ENCODE measurements at regions of chr6 and their contacts with region 1.

Region 1: DNA sequence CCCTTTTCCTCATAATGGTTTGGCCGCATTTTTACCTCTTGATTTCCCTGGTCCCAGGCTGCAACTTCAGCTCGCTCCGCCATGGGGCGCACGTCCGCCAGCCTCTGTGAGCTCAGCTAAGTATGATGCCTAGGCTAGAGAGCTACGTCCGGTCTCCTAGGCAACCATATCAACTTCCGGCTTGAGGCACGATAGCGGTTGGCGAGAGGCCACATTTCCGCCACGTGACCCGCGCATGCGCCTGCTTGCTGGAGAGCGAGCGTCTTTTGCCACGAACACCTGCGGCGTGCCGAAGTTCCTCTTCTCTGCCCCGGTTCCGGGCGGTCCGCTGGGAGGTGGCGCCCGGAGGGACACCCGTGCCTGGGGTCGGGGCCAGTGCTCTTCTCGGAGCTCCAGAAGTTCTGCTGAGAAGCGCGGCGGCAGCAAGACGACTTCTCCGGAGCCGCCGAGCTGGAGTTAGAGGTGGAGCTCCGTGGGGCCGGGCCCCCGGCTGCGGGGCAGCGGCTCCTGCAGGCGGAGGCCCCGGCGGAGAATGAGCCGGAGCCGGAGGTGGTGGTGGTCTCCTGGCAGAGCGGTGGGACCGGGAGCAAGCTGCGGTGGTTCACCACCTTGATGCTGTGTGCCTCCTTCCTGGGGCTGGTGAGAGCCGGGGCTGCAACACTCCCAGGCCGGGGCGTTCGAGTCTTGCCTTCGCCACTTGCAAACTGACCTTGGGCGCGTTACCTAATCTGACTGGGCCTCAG is 172.0 kb downstream of the SLC16A10 start:
- DNase-seq: peak; percentile 95 to 100 (median 99)
- ATAC-seq: peak; percentile 96 to 98 (median 96)
- H3K4me3 ChIP-seq: peak overlapping the region; percentile 70 to 74
- H3K4me3 Mint-ChIP-seq: peak overlapping the region; percentile 66 to 85 (median 81)
- H3K27ac ChIP-seq: peak overlapping the region; percentile 85
- H3K27ac Mint-ChIP-seq: peak overlapping the region; percentile 83 to 84
- H3K4me1 ChIP-seq: peaks cover 5 to 21% of the 10 kb centered on the region in 2 experiments
- H3K4me1 Mint-ChIP-seq: peaks cover 30 to 38% (median 34%) of the 10 kb centered on the region in 3 donors
- H3K27me3 ChIP-seq: peaks cover 0 to 2% of the 10 kb centered on the region in 2 experiments
- H3K27me3 Mint-ChIP-seq: peaks cover 0 to 8% of the 10 kb centered on the region in 2 donors

Region 2: DNA sequence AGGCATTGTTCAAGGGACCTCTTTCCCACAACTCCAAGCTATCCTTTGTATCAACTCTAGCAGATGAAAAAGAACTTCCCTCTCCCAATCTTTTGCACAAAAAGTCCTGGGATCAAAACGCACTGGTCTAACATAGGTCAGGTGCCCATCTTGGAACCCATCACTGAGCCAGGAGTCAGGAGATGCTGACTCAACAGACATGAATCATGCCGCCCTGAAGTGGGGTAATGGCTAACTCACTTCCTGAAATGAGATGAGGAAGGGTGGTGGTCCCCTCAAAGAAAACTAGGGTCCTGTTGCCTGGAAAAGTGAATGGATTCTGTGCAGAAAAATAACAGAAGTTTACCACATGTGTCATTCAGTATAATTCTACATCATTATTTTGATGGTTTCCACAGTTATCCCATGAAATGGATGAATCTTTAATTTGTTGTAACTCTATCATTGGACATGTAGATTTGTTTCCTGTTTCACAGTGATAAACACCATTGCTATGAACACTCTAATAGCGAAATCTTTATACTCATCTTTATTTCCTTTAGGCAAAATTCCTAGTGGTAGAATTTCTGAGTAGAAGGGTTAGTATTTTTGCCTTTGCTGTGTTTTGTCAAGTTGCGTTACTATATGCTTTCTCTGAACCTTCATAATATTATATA is 20.7 kb before region 1 on chr6:
- CTCF ChIA-PET with region 1: no interaction called
- POLR2A ChIA-PET with region 1: no interaction called
- DNase-seq: no peak
- ATAC-seq: no peak
- H3K4me3 ChIP-seq: no peak overlapping the region
- H3K4me3 Mint-ChIP-seq: no peak overlapping the region
- H3K27ac ChIP-seq: no peak overlapping the region
- H3K27ac Mint-ChIP-seq: no peak overlapping the region
- H3K4me1 ChIP-seq: no peaks in the 10 kb centered on the region
- H3K4me1 Mint-ChIP-seq: no peaks in the 10 kb centered on the region
- H3K27me3 ChIP-seq: peaks cover 0 to 2% of the 10 kb centered on the region in 2 experiments
- H3K27me3 Mint-ChIP-seq: peaks cover 0 to 4% of the 10 kb centered on the region in 2 donors

Region 3: GRCh38 chr6:111291336-111292259 is 32.3 kb after region 1 on chr6:
- CTCF ChIA-PET with region 1: interaction called, 3 to 11 read pairs
- POLR2A ChIA-PET with region 1: no interaction called
- DNase-seq: no peak
- ATAC-seq: no peak
- H3K4me3 ChIP-seq: no peak overlapping the region
- H3K4me3 Mint-ChIP-seq: no peak overlapping the region
- H3K27ac ChIP-seq: no peak overlapping the region
- H3K27ac Mint-ChIP-seq: peak overlapping the region in 1 of 2 donors; percentile 70
- H3K4me1 ChIP-seq: peaks cover 3 to 8% of the 10 kb centered on the region in 2 experiments
- H3K4me1 Mint-ChIP-seq: peaks cover 18 to 20% (median 19%) of the 10 kb centered on the region in 3 donors
- H3K27me3 ChIP-seq: no peaks in the 10 kb centered on the region
- H3K27me3 Mint-ChIP-seq: no peaks in the 10 kb centered on the region

Region 4: DNA sequence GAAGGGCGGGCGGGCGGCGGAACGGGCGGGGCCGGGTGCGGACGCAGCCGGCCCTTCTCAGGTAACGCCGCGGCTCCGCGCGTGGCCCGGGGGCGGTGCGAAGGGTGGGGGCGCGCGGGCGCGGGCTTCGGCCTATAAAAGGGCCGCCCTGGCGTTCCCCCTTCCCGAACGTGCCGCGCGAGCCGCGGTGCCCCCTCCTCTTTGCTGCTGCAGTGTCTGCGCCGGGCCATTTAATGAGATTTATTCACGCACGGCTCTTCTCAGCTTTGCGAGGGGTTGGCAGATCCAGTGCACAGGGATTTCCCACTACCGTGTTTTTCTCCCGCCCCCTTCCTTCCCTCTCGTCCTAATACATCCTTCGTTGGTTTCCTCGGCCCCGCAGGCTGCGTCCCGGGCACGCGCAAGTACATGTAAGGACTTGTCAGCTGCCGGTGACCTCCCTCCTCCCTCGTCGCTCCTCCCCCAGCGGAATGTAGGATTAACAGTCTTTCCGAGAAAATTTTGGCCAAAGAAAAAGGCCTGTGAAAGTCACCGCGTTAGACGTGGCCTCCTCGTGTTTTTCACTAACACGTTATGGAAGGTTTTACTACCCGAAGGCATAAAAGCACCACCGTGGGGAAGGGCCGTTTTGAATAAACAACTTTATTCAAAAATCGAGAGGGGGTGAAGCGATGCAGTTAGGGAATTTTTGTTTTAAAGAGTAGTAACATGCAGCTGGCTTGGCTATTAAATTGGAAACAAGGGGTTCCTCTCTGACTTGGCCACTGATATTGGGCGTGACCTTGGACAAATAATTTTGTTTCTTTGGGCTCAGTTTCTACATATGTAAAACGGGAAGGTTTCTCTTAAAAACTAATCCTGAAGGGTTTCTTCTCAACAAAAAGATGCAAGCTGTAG is 224.7 kb after region 1 on chr6:
- CTCF ChIA-PET with region 1: interaction called, 9 to 74 read pairs
- POLR2A ChIA-PET with region 1: interaction called in 1 of 2 experiments, 16 read pairs
- DNase-seq: peak in 25 of 35 experiments; percentile 64 to 91 (median 83)
- ATAC-seq: peak in 3 of 4 experiments; percentile 75 to 76 (median 75)
- H3K4me3 ChIP-seq: peak overlapping the region; percentile 96 to 98
- H3K4me3 Mint-ChIP-seq: peak overlapping the region; percentile 86 to 98 (median 97)
- H3K27ac ChIP-seq: peak overlapping the region; percentile 99
- H3K27ac Mint-ChIP-seq: peak overlapping the region; percentile 95 to 98
- H3K4me1 ChIP-seq: peaks cover 15 to 19% of the 10 kb centered on the region in 2 experiments
- H3K4me1 Mint-ChIP-seq: peaks cover 49 to 60% (median 58%) of the 10 kb centered on the region in 3 donors
- H3K27me3 ChIP-seq: no peaks in the 10 kb centered on the region
- H3K27me3 Mint-ChIP-seq: no peaks in the 10 kb centered on the region

Region 5: GRCh38 chr6:111642463-111643158 is 383.4 kb after region 1 on chr6:
- CTCF ChIA-PET with region 1: interaction called, 3 to 10 read pairs
- POLR2A ChIA-PET with region 1: no interaction called
- DNase-seq: peak in 14 of 35 experiments; percentile 3 to 42 (median 12)
- ATAC-seq: peak in 1 of 4 experiments; percentile 55
- H3K4me3 ChIP-seq: no peak overlapping the region
- H3K4me3 Mint-ChIP-seq: no peak overlapping the region
- H3K27ac ChIP-seq: no peak overlapping the region
- H3K27ac Mint-ChIP-seq: no peak overlapping the region
- H3K4me1 ChIP-seq: no peaks in the 10 kb centered on the region
- H3K4me1 Mint-ChIP-seq: peaks cover 0 to 2% (median 0%) of the 10 kb centered on the region in 3 donors
- H3K27me3 ChIP-seq: no peaks in the 10 kb centered on the region
- H3K27me3 Mint-ChIP-seq: no peaks in the 10 kb centered on the region

Region 6: DNA sequence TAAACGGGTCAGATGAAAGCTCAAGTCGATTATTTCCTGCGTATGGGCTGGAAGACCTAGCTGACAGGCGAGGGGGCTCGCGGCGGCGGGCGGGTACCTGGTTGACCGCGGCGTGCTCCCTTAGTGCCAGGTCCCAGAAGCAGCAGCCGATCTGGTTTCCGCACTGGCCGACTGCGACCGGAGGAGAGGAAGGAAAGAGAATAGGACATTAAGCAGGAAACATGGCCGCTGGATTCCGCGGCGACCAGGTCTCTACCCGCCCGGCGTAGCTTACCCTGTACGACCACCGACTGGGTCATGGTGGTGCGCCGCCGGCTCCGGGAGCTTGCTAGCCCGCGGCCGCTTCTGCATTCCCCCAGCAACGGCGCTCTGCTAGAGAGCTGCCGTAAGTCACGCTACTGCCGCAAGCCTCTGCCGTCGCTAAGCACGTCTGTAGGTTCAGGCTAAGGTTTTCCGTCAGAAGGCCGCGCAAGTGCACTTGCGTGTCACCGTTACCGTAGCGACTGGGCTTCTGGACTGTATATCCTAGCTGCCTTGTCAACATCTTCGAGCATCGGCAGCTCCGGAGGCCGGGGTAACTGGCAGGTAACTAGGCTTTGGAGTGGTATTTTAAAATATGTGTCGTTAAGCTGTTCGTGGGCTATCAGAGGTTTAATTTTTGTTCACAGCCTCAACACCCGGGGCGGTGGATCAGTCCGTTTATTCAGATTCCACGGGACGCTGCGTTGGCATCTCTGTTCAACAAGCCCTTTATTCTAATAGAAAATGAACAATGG is 828.1 kb after region 1 on chr6 and contains the starts of genes FAM229B and TUBE1:
- CTCF ChIA-PET with region 1: interaction called in 1 of 2 experiments, 18 read pairs
- POLR2A ChIA-PET with region 1: interaction called in 1 of 2 experiments, 6 read pairs
- DNase-seq: peak; percentile 69 to 96 (median 90)
- ATAC-seq: peak; percentile 95 to 97 (median 96)
- H3K4me3 ChIP-seq: peak within 1 kb of the TSS; percentile 83 to 88
- H3K4me3 Mint-ChIP-seq: no peak within 1 kb of the TSS
- H3K27ac ChIP-seq: peak within 1 kb of the TSS; percentile 89
- H3K27ac Mint-ChIP-seq: no peak within 1 kb of the TSS
- H3K4me1 ChIP-seq: peaks cover 0 to 9% of the 10 kb centered on the region in 2 experiments
- H3K4me1 Mint-ChIP-seq: peaks cover 9 to 12% (median 10%) of the 10 kb centered on the region in 3 donors
- H3K27me3 ChIP-seq: peaks cover 0 to 5% of the 10 kb centered on the region in 2 experiments
- H3K27me3 Mint-ChIP-seq: peaks cover 11 to 19% of the 10 kb centered on the region in 2 donors
- total RNA-seq, gene FAM229B: 1.2 to 3.7 (median 3.5) TPM
- total RNA-seq, gene TUBE1: 26.8 to 40.9 (median 33.6) TPM

Measured in T-cell (primary cell).